ENCODE measurements at regions of chrX and their contacts with region 1.

Region 1: DNA sequence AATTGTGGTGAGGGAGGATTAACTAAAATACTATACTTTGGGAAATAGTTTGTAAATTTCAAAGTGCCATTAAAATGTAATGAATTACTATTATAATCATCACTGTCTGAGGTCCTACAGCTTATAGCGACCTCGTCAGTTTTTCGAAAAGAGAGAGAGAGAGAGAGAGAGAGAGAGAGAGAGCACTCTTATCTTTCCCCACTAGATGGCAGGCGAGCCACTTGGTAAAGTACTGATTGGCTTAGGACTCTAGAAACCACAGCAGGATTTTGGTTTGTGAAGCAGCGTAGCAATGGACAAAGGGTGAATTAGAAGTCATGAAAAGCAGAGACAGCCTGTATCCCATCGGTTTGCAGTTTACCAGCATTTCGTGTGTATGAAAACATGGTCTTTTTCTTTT is 52.5 kb downstream of the LINC00632 start:
- DNase-seq: peak; percentile 45
- H3K4me3 Mint-ChIP-seq: no peak overlapping the region
- H3K27ac Mint-ChIP-seq: no peak overlapping the region
- H3K4me1 Mint-ChIP-seq: peaks cover 8% of the 10 kb centered on the region
- H3K27me3 Mint-ChIP-seq: peaks cover 23% of the 10 kb centered on the region

Region 2: DNA sequence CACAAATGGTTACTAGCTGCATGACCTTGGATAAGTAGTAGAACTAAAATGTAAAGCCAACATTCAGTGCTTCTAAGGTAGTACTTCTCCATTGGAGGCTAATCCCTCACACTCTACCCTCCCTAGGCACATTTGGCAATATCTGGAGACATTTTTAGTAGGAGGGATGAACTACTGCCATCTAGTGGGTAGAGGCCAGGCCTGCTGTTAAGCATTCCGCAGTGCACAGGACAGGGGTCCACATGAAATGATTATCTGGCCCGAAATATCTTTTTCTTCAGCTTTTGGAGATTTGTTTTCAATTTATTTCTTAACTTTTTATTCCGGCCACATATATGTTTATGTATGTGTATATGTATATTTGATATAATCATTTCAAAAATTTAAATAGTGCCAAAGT is 516.2 kb after region 1 on chrX:
- CTCF ChIA-PET with region 1: interaction called, 6 read pairs
- intact Hi-C with region 1: loop called (anchors 2 kb)
- DNase-seq: peak; percentile 4
- H3K4me3 Mint-ChIP-seq: no peak overlapping the region
- H3K27ac Mint-ChIP-seq: no peak overlapping the region
- H3K4me1 Mint-ChIP-seq: no peaks in the 10 kb centered on the region
- H3K27me3 Mint-ChIP-seq: no peaks in the 10 kb centered on the region

Region 3: DNA sequence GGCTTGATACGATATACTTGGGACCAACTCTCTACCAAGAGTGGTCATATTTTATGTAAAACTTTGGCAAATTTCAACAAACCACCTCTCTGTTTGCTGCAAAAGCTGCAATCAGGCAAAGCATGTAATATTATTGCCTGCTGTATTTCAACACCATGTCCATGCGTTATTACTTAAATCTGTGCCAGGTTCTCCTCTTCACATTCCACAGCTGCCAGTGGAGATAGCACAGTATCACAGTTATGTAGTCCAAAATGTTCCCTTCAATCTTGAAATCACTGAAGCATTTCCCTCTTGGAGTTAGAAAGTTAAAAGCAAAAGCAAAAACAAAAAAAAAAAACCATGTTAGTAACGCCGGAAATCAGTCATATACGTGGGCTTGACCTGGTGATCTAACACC is 1839.7 kb after region 1 on chrX:
- CTCF ChIA-PET with region 1: no interaction called
- intact Hi-C with region 1: loop called (anchors 10 kb)
- DNase-seq: no peak
- H3K4me3 Mint-ChIP-seq: no peak overlapping the region
- H3K27ac Mint-ChIP-seq: no peak overlapping the region
- H3K4me1 Mint-ChIP-seq: no peaks in the 10 kb centered on the region
- H3K27me3 Mint-ChIP-seq: no peaks in the 10 kb centered on the region